HEK293T (cell line): ENCODE measurements at regions of chr14 and their contacts with region 1.

Region 1: DNA sequence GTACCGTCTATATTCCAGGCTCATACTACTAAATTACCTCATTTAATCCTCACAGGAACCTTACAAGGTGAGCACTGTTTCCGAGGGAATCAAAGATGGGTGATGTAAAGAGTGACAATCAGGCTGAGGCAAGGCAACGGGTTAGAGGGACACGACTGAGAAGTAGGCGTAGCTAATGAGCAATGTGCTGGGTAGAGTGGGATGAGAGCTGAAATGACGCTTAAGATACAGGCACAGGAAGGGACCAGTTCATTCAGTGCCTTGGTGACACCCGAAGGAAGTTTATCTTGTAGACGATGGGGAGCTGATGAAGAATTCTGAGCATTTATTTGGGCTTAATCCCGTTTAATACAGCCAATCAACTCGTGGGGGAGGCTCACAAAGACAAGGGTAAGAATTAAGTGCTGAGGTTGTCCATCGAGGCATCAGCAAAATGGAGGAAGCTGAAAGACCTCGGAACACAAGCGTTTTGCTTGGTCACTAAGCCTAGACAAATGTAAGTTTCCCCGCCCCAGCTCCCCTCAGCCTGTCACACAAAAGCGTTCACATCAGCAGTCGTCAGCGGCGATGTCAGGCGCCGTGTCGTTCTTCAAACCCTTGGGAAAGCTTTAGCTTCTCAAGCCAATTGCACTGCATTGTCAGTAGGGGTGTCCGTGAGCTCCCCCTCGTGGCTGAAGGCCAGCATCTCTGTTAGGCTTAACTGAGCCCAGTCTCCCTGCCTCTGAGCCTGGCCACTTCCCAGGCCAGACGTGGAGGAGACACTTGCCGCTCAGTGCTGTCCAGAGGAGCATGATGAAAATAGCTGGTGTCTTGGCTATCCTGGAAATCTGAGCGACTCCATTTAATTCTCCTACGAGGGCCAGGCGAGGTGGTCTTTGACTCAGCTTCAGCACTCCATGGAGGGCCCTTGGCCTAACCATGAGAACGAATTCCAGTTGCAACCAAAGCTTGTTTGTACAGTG is 288.5 kb upstream of the G2E3 start:
- DNase-seq: peak; percentile 84

Region 2: GRCh38 chr14:30283826-30284446 is 13.5 kb after region 1 on chr14:
- CTCF ChIA-PET with region 1: interaction called, 36 read pairs
- POLR2A ChIA-PET with region 1: interaction called, 4 read pairs
- DNase-seq: peak; percentile 46

Region 3: GRCh38 chr14:30443368-30444007 is 173.0 kb after region 1 on chr14:
- CTCF ChIA-PET with region 1: interaction called, 13 read pairs
- POLR2A ChIA-PET with region 1: no interaction called
- DNase-seq: peak; percentile 21